Posterior vena cava (tissue), 2 donors: ENCODE measurements at regions of chr20 and their contacts with region 1.

Region 1: DNA sequence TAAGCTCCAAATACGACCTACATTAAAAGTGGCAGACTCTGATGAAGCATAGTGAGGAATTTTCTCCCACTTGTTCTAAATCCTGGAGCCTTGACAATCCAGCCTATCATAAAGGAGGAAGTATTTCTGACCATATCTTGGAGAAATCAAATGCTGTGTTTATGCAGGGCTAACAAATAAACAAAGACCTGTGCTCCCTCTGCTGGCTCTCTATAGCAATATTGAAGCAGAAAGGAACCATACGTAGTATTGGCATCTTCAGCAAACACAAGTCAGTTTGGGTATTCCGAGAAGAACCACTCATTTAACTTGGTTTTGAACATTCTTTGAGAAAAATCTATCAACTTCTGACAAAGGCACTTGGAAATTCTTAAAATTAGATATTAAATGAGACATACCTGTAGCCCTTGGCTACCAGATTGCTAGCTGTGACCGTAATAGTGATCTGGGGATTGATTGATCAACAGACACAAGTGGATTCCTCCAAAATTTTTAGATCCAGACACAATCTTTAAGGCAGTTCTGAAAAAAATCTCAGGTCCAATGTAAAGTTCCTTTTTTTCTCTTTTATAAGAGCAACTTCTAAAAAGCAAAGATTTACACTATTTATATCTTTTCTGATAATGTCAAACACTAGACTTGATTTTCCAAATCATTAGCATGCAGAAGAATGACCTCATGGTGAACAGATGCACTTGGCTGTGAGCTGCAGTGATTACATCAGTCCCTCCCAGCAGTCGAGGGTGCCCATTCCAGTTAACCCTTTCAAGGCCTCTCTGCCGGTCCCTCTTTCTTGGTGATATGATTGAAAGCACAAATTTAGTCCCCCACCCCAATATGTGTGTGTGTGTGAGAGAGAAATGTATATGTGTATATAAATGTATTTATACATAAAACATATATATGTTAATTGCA is 40.2 kb downstream of the INSM1 start:
- DNase-seq: no peak

Region 2: GRCh38 chr20:20267685-20268370 is 140.3 kb before region 1 on chr20:
- intact Hi-C with region 1: no loop called
- DNase-seq: no peak

Region 3: GRCh38 chr20:20343932-20344331 is 64.2 kb before region 1 on chr20:
- intact Hi-C with region 1: loop called in 1 of 2 experiments (anchors 10 kb)
- DNase-seq: no peak

Region 4: GRCh38 chr20:20520776-20521175 is 112.6 kb after region 1 on chr20:
- intact Hi-C with region 1: no loop called
- DNase-seq: no peak

Region 5: DNA sequence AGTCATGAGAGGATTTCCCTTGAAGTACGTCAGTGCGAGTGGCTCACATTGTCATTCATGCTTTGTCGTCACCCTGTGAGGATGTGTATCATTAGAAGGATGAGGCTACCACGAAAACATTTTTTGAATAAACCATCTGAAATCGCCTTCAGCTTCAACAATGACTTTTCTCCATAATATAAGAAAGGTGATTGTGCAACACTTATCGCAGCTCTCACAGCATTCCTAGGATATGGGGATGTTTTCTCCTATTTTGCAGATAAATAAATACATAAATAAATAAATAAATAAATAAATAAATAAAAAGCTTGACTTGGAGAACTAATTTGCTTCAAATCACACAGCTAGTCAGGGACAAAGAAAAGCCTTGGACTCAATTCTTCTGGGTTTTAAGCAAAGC is 1849.8 kb after region 1 on chr20:
- intact Hi-C with region 1: no loop called
- DNase-seq: no peak